Heart left ventricle (tissue), 16 donors: ENCODE measurements at regions of chr16 and their contacts with region 1.

Region 1: DNA sequence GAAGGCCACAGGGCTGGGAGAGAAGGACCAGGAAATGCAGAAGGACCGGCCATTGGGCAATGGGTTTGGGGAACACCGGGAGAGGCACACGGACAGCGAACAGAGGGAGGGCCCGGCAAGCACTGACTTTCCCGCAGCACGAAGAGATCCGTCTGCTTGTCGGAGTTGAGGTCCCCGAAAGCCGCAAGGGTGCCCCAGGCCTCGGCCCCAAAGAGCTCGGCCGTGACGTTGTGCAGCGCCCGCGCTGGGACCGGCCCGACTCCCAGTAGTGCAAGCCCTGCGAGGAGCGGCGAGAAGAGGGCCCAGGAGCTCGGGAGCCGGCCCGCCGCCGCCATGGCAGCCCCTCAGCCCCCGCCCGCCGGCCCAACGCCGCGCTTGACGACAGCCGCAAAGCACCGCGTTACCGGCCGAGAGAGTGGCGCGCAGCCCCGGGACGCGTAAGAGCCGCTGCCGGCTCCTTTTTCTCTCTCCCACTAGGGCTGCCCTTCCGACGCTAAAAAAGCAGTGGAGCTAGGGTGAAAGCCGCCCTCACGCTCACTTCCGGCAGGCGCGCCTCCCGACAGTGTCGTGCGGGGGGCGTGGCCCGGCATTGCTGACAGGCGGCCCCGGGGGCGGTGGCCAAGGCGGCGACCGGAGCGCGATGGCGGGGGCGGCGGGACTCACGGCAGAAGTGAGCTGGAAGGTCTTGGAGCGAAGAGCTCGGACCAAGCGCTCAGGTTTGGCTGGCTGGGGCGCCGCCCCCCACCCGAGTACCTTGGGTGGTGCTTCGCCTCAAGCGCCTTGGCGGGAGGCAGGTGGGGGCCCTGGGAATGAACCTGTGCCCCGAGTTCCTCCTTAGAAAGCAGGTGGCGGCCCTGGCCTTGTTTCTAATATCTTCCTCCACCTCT is at the starts of genes ITFG1 and PHKB:
- DNase-seq: peak; percentile 94 to 96 (median 95)
- ATAC-seq: peak; percentile 90 to 97 (median 96)
- H3K4me3 ChIP-seq: peak within 1 kb of the TSS; percentile 78 to 96 (median 90)
- H3K27ac ChIP-seq: peak within 1 kb of the TSS; percentile 94 to 100 (median 99)
- H3K4me1 ChIP-seq: peaks cover 13 to 59% (median 50%) of the 10 kb centered on the region in 12 donors
- H3K27me3 ChIP-seq: no peaks in the 10 kb centered on the region
- CTCF ChIP-seq: peak in 7 of 12 donors; percentile 6 to 26 (median 18)
- POLR2A ChIP-seq: peak in 1 of 2 donors; percentile 83
- total RNA-seq, gene ITFG1: 45.2 to 102 (median 73.4) TPM
- total RNA-seq, gene PHKB: 49.2 to 70.1 (median 61.9) TPM

Region 2: GRCh38 chr16:46973207-46973995 is 487.6 kb before region 1 on chr16 and contains the start of gene DNAJA2:
- intact Hi-C with region 1: loop called in 1 of 10 experiments (anchors 5 kb)
- DNase-seq: peak; percentile 93 to 97 (median 94)
- ATAC-seq: peak; percentile 97 to 99 (median 99)
- H3K4me3 ChIP-seq: peak within 1 kb of the TSS; percentile 72 to 98 (median 84)
- H3K27ac ChIP-seq: peak within 1 kb of the TSS; percentile 90 to 99 (median 96)
- H3K4me1 ChIP-seq: peaks cover 0 to 53% (median 39%) of the 10 kb centered on the region in 12 donors
- H3K27me3 ChIP-seq: no peaks in the 10 kb centered on the region
- CTCF ChIP-seq: peak in 2 of 12 donors; percentile 23 to 29
- POLR2A ChIP-seq: peak in 1 of 2 donors; percentile 91
- total RNA-seq, gene DNAJA2: 58.5 to 92.6 (median 81.4) TPM

Region 3: GRCh38 chr16:47358816-47359215 is 102.1 kb before region 1 on chr16:
- intact Hi-C with region 1: no loop called
- DNase-seq: no peak
- ATAC-seq: no peak
- H3K4me3 ChIP-seq: no peak overlapping the region
- H3K27ac ChIP-seq: no peak overlapping the region
- H3K4me1 ChIP-seq: peaks cover 0 to 8% (median 0%) of the 10 kb centered on the region in 12 donors
- H3K27me3 ChIP-seq: no peaks in the 10 kb centered on the region
- CTCF ChIP-seq: no peak
- POLR2A ChIP-seq: no peak

Region 4: GRCh38 chr16:47492428-47493377 is 31.7 kb after region 1 on chr16:
- intact Hi-C with region 1: loop called in 2 of 10 experiments (anchors 1 to 2 kb)
- DNase-seq: peak; percentile 88 to 92 (median 90)
- ATAC-seq: peak; percentile 100
- H3K4me3 ChIP-seq: peak overlapping the region in 9 of 12 donors; percentile 1 to 45 (median 28)
- H3K27ac ChIP-seq: peak overlapping the region; percentile 51 to 88 (median 77)
- H3K4me1 ChIP-seq: peaks cover 5 to 36% (median 26%) of the 10 kb centered on the region in 12 donors
- H3K27me3 ChIP-seq: no peaks in the 10 kb centered on the region
- CTCF ChIP-seq: peak in 1 of 12 donors; percentile 8
- POLR2A ChIP-seq: peak in 1 of 2 donors; percentile 69

Region 5: DNA sequence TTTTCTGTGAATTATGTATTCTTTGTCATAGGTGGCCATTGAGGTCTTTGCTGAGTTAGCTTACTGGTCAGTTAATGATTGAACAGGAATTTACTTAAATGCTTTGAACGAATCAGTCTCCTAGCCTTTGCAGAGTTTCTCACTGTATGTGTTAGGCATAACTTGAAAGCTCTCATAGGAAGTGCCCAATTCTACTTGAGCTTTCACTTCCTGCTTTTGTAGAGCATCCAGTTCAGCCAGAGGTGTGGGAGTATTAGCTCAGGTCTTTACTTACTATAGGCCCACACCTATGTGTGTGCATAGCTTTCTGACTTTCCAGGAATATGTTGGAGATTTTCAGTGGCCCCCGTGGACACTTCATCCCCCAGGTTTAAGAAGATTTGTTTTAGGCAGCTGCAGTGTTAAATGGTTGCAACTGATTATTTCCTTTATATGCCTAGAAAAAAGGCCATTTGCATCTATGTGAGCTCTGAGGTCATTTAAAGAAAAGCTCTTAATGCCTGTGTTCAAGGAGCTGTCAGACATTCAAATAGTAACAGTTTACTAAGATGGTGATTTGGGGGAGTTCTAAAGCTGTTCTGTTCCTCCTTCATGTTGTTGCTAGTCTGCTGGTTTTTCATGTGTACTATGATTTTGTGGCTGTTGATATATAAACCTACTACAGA is 62.5 kb after region 1 on chr16:
- intact Hi-C with region 1: loop called in 3 of 10 experiments (anchors 2 to 5 kb)
- DNase-seq: no peak
- ATAC-seq: peak in 2 of 4 donors; percentile 42 to 66
- H3K4me3 ChIP-seq: no peak overlapping the region
- H3K27ac ChIP-seq: peak overlapping the region in 8 of 12 donors; percentile 1 to 58 (median 30)
- H3K4me1 ChIP-seq: peaks cover 0 to 31% (median 10%) of the 10 kb centered on the region in 12 donors
- H3K27me3 ChIP-seq: no peaks in the 10 kb centered on the region
- CTCF ChIP-seq: no peak
- POLR2A ChIP-seq: no peak

Region 6: DNA sequence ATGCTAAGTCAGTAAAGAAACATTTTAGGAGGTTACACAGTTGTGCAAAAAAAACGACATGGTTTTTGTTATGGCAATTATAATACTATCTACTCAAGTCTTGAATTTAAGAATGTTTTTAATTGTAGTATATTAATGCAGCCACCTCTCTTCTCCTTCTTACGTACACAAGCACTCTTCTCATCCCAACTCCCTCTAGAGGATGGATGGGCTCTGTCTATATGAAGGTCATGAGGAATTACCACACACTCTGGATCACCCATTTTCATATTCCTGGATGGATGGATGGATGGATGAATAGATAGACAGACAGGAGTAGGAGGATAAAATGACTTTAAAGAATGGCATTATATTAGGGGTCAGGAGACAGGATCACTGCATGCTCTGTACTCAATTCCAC is 120.2 kb after region 1 on chr16:
- intact Hi-C with region 1: loop called in 2 of 10 experiments (anchors 10 kb)
- DNase-seq: no peak
- ATAC-seq: no peak
- H3K4me3 ChIP-seq: no peak overlapping the region
- H3K27ac ChIP-seq: no peak overlapping the region
- H3K4me1 ChIP-seq: peaks cover 0 to 11% (median 0%) of the 10 kb centered on the region in 12 donors
- H3K27me3 ChIP-seq: no peaks in the 10 kb centered on the region
- CTCF ChIP-seq: no peak
- POLR2A ChIP-seq: no peak

Region 7: DNA sequence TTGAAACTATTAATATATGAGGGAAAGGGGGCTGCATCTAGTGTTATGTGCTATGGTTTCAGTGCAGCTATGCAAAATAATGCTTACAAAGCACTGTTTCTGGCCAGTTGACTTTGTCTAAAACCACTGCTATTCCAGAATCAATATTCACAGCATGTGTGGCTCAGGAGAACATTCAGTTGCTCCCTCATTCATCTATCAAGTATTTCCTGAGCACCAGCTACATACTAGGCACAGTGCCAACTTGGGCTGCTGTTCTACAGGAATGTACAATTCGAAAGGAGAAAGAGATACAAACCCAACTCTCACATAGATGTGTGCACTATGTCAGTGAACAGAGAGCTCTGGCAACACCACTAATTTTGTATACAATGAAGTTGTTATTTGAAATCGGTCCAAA is 183.2 kb after region 1 on chr16:
- intact Hi-C with region 1: loop called in 1 of 10 experiments (anchors 10 kb)
- DNase-seq: peak in 3 of 5 donors; percentile 27 to 45 (median 39)
- ATAC-seq: peak in 3 of 4 donors; percentile 24 to 55 (median 54)
- H3K4me3 ChIP-seq: no peak overlapping the region
- H3K27ac ChIP-seq: peak overlapping the region in 1 of 12 donors; percentile 23
- H3K4me1 ChIP-seq: peaks cover 0 to 25% (median 8%) of the 10 kb centered on the region in 12 donors
- H3K27me3 ChIP-seq: no peaks in the 10 kb centered on the region
- CTCF ChIP-seq: no peak
- POLR2A ChIP-seq: no peak